Upper lobe of right lung (tissue), 1 donor: ENCODE measurements at regions of chr4 and their contacts with region 1.

Region 1: GRCh38 chr4:154551872-154552686 is 1.9 kb upstream of the PLRG1 start:
- DNase-seq: peak; percentile 77
- ATAC-seq: peak; percentile 83
- H3K4me3 ChIP-seq: no peak overlapping the region
- H3K27ac ChIP-seq: no peak overlapping the region
- H3K4me1 ChIP-seq: peaks cover 19% of the 10 kb centered on the region
- H3K27me3 ChIP-seq: no peaks in the 10 kb centered on the region
- CTCF ChIP-seq: peak; percentile 89

Region 2: DNA sequence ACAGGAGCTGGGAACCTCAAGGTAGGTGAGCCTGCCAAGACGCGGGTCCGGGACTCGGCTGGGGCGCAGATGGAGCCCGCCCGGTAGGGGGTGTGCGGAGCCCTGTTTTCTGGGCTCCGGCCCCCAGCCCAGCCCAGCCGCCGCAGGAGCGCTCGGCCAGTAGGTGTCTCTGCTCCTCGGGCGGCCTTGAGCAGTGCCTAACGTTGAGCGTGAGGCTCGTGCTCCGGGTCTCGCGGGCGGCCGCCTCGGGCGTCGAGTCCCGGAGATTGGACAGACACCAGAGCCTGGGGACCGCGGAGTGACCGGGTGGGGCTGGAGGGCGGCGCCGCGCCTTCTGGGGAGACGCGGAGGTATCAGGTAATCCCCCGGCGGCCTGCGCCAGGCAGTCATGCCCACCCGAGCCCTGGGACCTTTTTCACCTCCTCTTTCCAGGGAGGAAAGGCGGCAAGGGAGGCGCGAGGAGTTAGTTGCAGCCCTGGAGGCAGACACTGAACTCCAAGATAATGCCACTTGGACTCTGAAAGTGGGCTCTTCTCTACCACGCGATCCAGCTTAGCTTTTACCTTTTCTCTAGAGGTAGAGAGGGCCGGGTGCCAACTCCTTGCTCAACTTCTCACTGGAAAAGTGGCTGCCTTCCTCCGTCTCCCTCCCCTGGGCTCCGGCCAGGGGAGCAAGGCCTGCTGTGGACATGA is 74.9 kb after region 1 on chr4:
- intact Hi-C with region 1: loop called (anchors 10 kb)
- DNase-seq: peak; percentile 87
- ATAC-seq: peak; percentile 96
- H3K4me3 ChIP-seq: peak overlapping the region; percentile 42
- H3K27ac ChIP-seq: peak overlapping the region; percentile 39
- H3K4me1 ChIP-seq: peaks cover 6% of the 10 kb centered on the region
- H3K27me3 ChIP-seq: peaks cover 2% of the 10 kb centered on the region
- CTCF ChIP-seq: peak; percentile 54